Activated naive CD4-positive, alpha-beta T cell treated with anti-CD3 and anti-CD28 coated beads for 36 hours (primary cell): ENCODE measurements at regions of chr20 and their contacts with region 1.

Region 1: DNA sequence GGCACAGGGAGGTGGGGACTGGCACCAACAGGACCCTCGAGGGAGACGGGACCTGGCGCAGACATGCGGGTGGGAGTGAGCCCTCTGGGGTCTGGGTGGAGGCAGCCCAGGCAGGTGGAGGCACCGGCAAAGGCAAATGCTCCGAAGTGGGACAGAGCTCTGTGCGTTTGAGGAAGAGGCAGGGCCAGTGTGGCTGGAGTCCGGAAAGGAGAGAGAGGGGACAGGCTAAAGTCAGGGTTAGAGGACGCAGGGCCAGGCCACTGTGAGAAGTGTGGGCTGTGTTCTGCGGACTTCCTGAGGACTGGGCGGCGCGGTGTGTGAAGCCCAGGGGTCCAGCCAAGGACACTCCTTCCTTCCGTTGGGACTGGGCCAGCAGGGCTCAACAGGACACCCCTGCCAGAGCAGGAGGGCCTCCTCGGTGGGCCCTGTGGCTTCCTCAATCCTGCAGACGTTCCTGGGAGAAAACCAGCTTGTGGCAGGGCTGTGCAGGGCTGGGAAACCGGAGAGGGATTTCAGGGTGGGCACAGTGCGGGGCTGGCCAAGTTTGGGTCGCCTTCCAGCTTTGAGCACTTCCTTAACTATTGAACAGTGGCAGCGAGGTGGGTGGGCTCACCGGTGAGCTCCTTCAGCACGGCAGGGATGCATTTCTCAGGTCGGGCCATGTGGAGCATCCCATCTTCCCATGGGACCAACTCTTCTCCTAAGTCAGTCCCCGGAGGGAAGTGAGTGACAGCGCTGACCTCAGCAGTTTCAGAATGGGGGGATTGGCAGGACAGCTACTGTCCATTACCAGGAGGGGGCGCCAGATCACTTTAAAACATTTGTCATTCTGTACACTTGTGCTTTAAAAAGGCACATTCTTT is 22.5 kb downstream of the MOCS3 start:
- DNase-seq: peak; percentile 83
- H3K4me3 Mint-ChIP-seq: no peak overlapping the region
- H3K27ac Mint-ChIP-seq: peak overlapping the region; percentile 19
- H3K4me1 Mint-ChIP-seq: peaks cover 15% of the 10 kb centered on the region
- H3K27me3 Mint-ChIP-seq: peaks cover 19% of the 10 kb centered on the region

Region 2: GRCh38 chr20:50992733-50993457 is 11.8 kb after region 1 on chr20:
- CTCF ChIA-PET with region 1: interaction called, 15 read pairs
- intact Hi-C with region 1: no loop called
- DNase-seq: peak; percentile 66
- H3K4me3 Mint-ChIP-seq: no peak overlapping the region
- H3K27ac Mint-ChIP-seq: no peak overlapping the region
- H3K4me1 Mint-ChIP-seq: no peaks in the 10 kb centered on the region
- H3K27me3 Mint-ChIP-seq: no peaks in the 10 kb centered on the region

Region 3: DNA sequence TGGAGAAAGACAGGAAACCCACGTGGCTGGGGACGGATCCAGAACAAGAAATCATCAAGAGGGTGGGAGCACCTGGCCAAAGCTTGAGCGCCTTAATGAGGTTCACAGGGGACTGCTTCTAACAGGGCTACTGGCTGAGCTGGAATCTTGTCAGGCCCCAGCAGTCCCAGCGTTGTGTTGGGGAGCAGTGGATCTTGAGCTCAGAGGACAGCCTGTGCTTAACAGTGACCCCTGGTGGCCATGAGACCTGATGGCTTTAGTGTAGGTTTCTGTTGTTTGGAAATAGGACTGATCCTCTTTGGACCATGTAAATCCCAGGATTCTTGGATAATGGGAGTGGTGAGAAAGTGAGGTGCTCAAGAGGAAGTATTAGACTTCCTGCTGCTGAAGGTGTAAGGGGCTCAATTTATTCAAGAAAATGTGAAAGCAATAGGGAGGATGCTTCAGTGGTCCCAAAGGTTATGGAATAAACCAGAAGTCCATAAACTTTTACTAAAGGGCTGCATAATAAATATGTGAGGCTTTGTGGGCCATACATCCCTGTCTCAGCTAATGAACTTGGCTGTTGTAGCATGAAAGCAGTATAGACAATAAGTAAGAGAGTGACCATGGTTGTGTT is 345.2 kb after region 1 on chr20:
- CTCF ChIA-PET with region 1: interaction called, 18 read pairs
- intact Hi-C with region 1: no loop called
- DNase-seq: peak; percentile 62
- H3K4me3 Mint-ChIP-seq: no peak overlapping the region
- H3K27ac Mint-ChIP-seq: no peak overlapping the region
- H3K4me1 Mint-ChIP-seq: no peaks in the 10 kb centered on the region
- H3K27me3 Mint-ChIP-seq: peaks cover 5% of the 10 kb centered on the region